ENCODE measurements at regions of chr3 and their contacts with region 1.

Region 1: GRCh38 chr3:64039981-64040733 is 16.9 kb upstream of the PSMD6 start:
- DNase-seq: no peak
- H3K4me3 ChIP-seq: no peak overlapping the region
- H3K27ac ChIP-seq: no peak overlapping the region
- H3K4me1 ChIP-seq: no peaks in the 10 kb centered on the region
- H3K27me3 ChIP-seq: no peaks in the 10 kb centered on the region
- CTCF ChIP-seq: no peak
- POLR2A ChIP-seq: no peak

Region 2: GRCh38 chr3:64399205-64399800 is 359.1 kb after region 1 on chr3:
- intact Hi-C with region 1: loop called (anchors 5 kb)
- DNase-seq: no peak
- H3K4me3 ChIP-seq: no peak overlapping the region
- H3K27ac ChIP-seq: no peak overlapping the region
- H3K4me1 ChIP-seq: peaks cover 10% of the 10 kb centered on the region
- H3K27me3 ChIP-seq: no peaks in the 10 kb centered on the region
- CTCF ChIP-seq: peak; percentile 36 to 65 (median 46)
- POLR2A ChIP-seq: no peak

Region 3: DNA sequence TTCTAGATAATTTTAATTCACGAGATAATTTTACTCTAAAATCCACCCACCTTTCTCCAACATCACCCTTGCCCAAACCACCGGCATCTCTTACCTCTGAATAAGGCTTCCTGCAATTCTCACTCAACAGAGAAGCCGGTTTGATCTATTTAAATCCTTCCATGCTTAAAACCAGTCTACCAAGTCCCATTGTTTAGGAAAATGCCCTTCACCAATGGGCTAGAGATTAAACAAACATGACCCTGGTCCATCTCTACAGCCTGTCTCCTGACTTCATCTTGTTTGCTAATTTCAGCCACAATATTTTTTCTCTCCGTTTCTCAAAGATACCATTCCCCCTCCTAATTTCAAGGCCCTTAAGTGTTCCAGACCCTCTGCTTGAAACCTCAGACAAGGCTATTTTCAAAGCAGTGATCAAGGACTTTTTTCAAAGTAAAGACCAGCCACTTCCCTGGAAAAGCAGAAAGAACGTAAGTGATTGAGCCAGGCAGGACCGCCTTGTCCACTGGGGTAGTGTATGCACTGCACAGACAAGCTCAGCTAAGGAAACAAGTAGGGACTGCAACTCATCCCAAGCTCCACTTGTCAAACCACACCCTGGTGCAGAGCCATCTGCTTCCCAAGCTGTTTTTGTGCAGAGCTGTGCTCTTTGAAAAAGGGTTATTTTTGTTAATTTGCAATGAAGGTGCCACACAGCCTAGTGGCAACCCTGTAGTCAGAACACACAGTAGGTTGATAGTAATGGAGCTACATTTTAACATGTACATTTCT is 454.2 kb after region 1 on chr3:
- intact Hi-C with region 1: no loop called
- DNase-seq: no peak
- H3K4me3 ChIP-seq: no peak overlapping the region
- H3K27ac ChIP-seq: no peak overlapping the region
- H3K4me1 ChIP-seq: peaks cover 2% of the 10 kb centered on the region
- H3K27me3 ChIP-seq: no peaks in the 10 kb centered on the region
- CTCF ChIP-seq: no peak
- POLR2A ChIP-seq: no peak

Measured in vagina (tissue), 2 donors.